SK-N-SH (cell line): ENCODE measurements at regions of chr1 and their contacts with region 1.

Region 1: DNA sequence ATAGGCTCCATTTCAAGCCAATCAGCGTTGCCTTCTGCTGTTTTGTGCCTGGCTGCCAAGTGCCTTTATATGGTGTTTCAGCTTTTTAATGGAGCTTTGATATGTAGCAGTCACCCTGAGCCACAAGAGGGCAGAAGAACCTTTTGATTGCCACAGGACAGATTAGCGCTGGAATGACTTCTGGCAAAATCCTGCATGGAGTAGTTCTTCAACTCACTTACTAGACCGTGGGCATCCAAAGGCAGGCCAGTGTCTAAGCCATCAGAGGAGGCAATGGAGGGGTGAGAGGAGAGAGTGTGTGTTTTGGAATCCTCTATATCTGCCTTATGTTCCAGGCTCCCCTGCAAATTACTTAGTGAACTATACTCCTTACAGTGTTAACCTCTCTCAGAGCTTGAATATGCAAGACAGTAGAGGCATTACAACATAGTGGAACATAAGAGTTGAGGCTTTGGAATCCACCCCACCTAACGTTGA is 56.2 kb downstream of the ST3GAL3 start:
- DNase-seq: peak; percentile 78
- H3K4me3 ChIP-seq: no peak overlapping the region
- H3K27ac ChIP-seq: no peak overlapping the region
- H3K4me1 ChIP-seq: peaks cover 5 to 11% of the 10 kb centered on the region in 2 experiments
- H3K27me3 ChIP-seq: no peaks in the 10 kb centered on the region
- CTCF ChIP-seq: peak; percentile 94
- EP300 ChIP-seq: no peak
- RAD21 ChIP-seq: peak; percentile 99

Region 2: GRCh38 chr1:43742026-43742425 is 21.5 kb before region 1 on chr1:
- CTCF ChIA-PET with region 1: interaction called, 10 read pairs
- POLR2A ChIA-PET with region 1: no interaction called
- DNase-seq: no peak
- H3K4me3 ChIP-seq: no peak overlapping the region
- H3K27ac ChIP-seq: no peak overlapping the region
- H3K4me1 ChIP-seq: no peaks in the 10 kb centered on the region
- H3K27me3 ChIP-seq: no peaks in the 10 kb centered on the region
- CTCF ChIP-seq: no peak
- EP300 ChIP-seq: no peak
- RAD21 ChIP-seq: no peak

Region 3: DNA sequence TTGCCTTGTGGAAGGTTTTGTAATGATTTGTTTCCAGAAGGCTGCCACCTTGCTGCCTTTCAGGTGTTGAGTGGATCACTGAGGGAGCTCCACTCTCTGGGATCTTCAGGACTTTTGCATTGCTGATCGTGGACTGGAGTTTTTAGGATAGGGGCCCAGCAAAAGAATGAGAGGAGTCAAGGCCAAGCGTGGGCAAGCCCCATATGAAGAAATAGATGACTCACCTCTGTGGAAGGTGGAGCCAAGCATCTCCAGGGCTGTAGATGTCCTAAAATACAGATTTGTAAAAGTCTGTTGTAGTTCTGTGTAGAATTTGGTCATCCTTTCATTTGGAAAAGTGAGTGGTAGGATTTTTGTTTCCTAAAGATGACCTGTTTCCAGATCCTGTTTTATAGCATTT is 10.8 kb after region 1 on chr1:
- CTCF ChIA-PET with region 1: interaction called, 26 read pairs
- POLR2A ChIA-PET with region 1: no interaction called
- DNase-seq: no peak
- H3K4me3 ChIP-seq: no peak overlapping the region
- H3K27ac ChIP-seq: peak overlapping the region in 1 of 2 experiments; percentile 33; a peak in 2 of 4 replicates
- H3K4me1 ChIP-seq: peaks cover 6 to 10% of the 10 kb centered on the region in 2 experiments; a peak in 3 of 4 replicates
- H3K27me3 ChIP-seq: no peaks in the 10 kb centered on the region
- CTCF ChIP-seq: no peak
- EP300 ChIP-seq: no peak
- RAD21 ChIP-seq: no peak

Region 4: DNA sequence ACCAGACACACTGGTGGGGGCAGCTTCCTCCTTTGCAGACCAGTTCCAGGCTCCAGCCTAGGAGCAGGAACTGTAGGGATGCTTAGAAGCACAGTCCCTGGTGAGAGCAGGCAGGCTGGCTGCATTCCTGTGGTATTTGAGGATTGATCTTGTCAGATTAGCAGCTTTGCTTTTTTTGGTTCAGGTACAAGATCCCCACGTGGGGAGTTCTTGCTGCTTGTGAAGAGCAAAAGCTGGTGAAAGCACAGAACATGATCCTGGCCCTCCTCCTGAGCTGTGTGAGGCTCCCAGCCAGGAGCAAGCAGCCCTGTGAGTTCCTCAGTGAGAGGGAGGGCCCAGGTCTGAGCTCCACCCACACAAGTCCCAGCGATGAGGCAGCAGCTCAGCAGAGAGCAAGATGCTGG is 94.8 kb after region 1 on chr1:
- CTCF ChIA-PET with region 1: interaction called, 13 read pairs
- POLR2A ChIA-PET with region 1: no interaction called
- DNase-seq: peak; percentile 30
- H3K4me3 ChIP-seq: no peak overlapping the region
- H3K27ac ChIP-seq: peak overlapping the region; percentile 58 to 70
- H3K4me1 ChIP-seq: peaks cover 35 to 36% of the 10 kb centered on the region in 2 experiments
- H3K27me3 ChIP-seq: no peaks in the 10 kb centered on the region
- CTCF ChIP-seq: no peak
- EP300 ChIP-seq: peak in 1 of 2 experiments; percentile 94; a peak in 3 of 4 replicates
- RAD21 ChIP-seq: no peak

Region 5: GRCh38 chr1:43912607-43913006 is 149.1 kb after region 1 on chr1:
- CTCF ChIA-PET with region 1: interaction called, 29 read pairs
- POLR2A ChIA-PET with region 1: interaction called, 3 read pairs
- DNase-seq: no peak
- H3K4me3 ChIP-seq: no peak overlapping the region
- H3K27ac ChIP-seq: peak overlapping the region in 1 of 2 experiments; percentile 82; a peak in 2 of 4 replicates
- H3K4me1 ChIP-seq: peaks cover 14 to 43% of the 10 kb centered on the region in 2 experiments; a peak in 3 of 4 replicates
- H3K27me3 ChIP-seq: no peaks in the 10 kb centered on the region
- CTCF ChIP-seq: no peak
- EP300 ChIP-seq: no peak
- RAD21 ChIP-seq: no peak

Region 6: GRCh38 chr1:44002606-44003157 is 239.1 kb after region 1 on chr1:
- CTCF ChIA-PET with region 1: interaction called, 18 read pairs
- POLR2A ChIA-PET with region 1: no interaction called
- DNase-seq: peak; percentile 59
- H3K4me3 ChIP-seq: no peak overlapping the region
- H3K27ac ChIP-seq: no peak overlapping the region
- H3K4me1 ChIP-seq: peaks cover 0 to 31% of the 10 kb centered on the region in 2 experiments; a peak in 2 of 4 replicates
- H3K27me3 ChIP-seq: no peaks in the 10 kb centered on the region
- CTCF ChIP-seq: peak; percentile 30
- EP300 ChIP-seq: no peak
- RAD21 ChIP-seq: no peak

Region 7: DNA sequence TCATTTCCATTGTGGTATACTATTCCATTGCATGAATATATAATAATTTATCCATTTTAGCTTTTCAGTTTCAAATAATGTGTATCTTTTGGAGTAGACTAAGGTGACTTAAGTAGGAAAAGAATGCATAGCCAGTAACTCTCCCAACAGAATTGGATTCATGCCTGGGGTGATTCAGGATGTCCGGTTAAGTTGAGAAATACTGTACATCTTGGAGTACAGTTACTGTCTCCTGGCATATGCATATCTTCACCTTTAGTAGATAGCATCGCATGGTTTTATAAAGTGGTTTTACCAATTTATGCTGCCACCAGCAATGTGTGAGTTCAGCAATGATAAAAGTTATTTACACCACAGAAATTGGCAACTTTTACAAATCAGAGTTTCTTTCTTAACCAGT is 286.3 kb after region 1 on chr1:
- CTCF ChIA-PET with region 1: interaction called, 22 read pairs
- POLR2A ChIA-PET with region 1: no interaction called
- DNase-seq: no peak
- H3K4me3 ChIP-seq: peak overlapping the region in 1 of 2 experiments; percentile 32; a peak in 1 of 4 replicates
- H3K27ac ChIP-seq: peak overlapping the region in 1 of 2 experiments; percentile 91; a peak in 2 of 4 replicates
- H3K4me1 ChIP-seq: peaks cover 0 to 17% of the 10 kb centered on the region in 2 experiments
- H3K27me3 ChIP-seq: no peaks in the 10 kb centered on the region
- CTCF ChIP-seq: no peak
- EP300 ChIP-seq: peak in 1 of 2 experiments; percentile 89; a peak in 2 of 4 replicates
- RAD21 ChIP-seq: no peak